ENCODE measurements at regions of chr16 and their contacts with region 1.

Region 1: GRCh38 chr16:6656760-6657159 is 675.9 kb upstream of the RBFOX1 start:
- DNase-seq: no peak
- ATAC-seq: no peak
- H3K4me3 ChIP-seq: no peak overlapping the region
- H3K27ac ChIP-seq: no peak overlapping the region
- H3K4me1 ChIP-seq: no peaks in the 10 kb centered on the region
- H3K27me3 ChIP-seq: no peaks in the 10 kb centered on the region
- CTCF ChIP-seq: no peak

Region 2: DNA sequence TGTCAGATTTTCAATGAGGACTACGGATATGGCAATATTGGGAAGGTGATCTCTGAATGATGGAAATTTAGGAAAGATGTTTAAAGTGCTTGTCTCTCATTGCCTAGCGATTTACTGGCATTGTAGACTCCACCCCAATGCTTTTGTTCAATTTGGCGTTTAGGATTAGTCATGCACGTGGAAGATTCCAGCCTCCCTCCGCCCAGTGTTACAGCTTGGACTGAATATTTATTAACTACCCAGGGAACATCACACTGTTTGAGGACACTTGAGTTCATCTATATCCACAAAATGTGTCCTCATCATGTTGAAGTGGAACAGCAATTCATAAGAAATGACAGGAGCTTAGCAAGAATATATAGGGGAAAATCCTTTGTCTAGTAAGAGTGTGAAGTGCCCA is 63.0 kb before region 1 on chr16:
- intact Hi-C with region 1: loop called in 1 of 3 experiments (anchors 10 kb)
- DNase-seq: no peak
- ATAC-seq: no peak
- H3K4me3 ChIP-seq: no peak overlapping the region
- H3K27ac ChIP-seq: no peak overlapping the region
- H3K4me1 ChIP-seq: no peaks in the 10 kb centered on the region
- H3K27me3 ChIP-seq: no peaks in the 10 kb centered on the region
- CTCF ChIP-seq: no peak

Measured in pancreas (tissue), 10 donors.